ENCODE measurements at regions of chr2 and their contacts with region 1.

Region 1: DNA sequence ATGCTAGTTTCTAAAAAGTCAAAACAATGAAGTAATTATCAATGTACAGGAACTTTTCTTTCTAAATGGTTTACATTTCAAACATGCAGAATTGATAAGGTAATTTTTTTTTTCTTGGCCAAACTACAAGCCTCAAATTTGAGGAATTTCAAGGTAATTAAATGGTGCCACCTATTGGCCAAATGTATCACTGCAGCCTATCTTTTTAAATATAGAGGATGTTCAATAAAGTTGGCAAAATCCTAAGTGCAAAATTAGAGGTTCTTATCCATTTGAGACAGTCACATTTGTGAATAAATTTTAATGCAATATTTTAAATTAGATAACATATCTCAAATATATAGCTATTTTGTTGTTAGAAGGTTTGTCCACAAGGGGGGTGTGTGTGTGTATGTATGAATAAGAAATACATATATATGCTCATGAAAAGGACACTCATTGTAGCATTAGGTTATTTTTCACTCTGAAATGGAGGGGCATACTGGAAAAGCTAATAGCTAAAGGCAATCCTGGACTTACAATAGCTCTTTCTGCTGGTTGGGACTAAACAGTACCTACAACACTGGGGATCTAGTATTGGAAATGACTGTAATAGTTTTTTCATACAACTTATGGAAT is 26.2 kb downstream of the MMADHC start:
- DNase-seq: no peak
- ATAC-seq: peak; percentile 49 to 80 (median 72)
- H3K4me3 ChIP-seq: no peak overlapping the region
- H3K27ac ChIP-seq: peak overlapping the region in 1 of 4 donors; percentile 25
- H3K4me1 ChIP-seq: peaks cover 0 to 11% (median 9%) of the 10 kb centered on the region in 3 donors
- H3K27me3 ChIP-seq: no peaks in the 10 kb centered on the region
- CTCF ChIP-seq: peak; percentile 44 to 90 (median 88)

Region 2: DNA sequence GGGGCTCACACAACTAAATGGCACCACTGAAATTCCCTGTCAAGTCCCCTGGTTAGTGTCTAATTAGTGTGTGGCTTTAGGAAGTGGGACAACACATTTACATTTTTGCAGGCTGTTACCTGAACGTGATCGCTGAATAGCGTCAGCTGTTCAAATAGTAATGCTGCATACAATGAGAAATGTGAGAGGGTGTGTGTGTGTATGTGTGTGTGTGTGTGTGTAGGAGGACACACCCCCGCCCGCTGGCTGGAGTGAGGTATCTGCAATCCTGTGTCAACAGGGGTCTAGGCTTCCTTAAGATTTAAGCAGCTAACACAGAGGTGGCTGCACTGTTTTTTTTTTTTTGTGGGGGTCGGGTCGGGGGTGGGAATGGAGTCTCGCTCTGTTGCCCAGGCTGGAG is 527.7 kb before region 1 on chr2:
- intact Hi-C with region 1: loop called in 1 of 3 experiments (anchors 5 kb)
- DNase-seq: peak in 3 of 6 donors; percentile 41 to 69 (median 54)
- ATAC-seq: peak; percentile 13 to 52 (median 32)
- H3K4me3 ChIP-seq: no peak overlapping the region
- H3K27ac ChIP-seq: no peak overlapping the region
- H3K4me1 ChIP-seq: no peaks in the 10 kb centered on the region
- H3K27me3 ChIP-seq: no peaks in the 10 kb centered on the region
- CTCF ChIP-seq: no peak

Region 3: GRCh38 chr2:149527998-149528755 is 33.2 kb before region 1 on chr2:
- intact Hi-C with region 1: no loop called
- DNase-seq: no peak
- ATAC-seq: no peak
- H3K4me3 ChIP-seq: no peak overlapping the region
- H3K27ac ChIP-seq: no peak overlapping the region
- H3K4me1 ChIP-seq: no peaks in the 10 kb centered on the region
- H3K27me3 ChIP-seq: no peaks in the 10 kb centered on the region
- CTCF ChIP-seq: no peak